T-cell (primary cell): ENCODE measurements at regions of chrX and their contacts with region 1.

Region 1: DNA sequence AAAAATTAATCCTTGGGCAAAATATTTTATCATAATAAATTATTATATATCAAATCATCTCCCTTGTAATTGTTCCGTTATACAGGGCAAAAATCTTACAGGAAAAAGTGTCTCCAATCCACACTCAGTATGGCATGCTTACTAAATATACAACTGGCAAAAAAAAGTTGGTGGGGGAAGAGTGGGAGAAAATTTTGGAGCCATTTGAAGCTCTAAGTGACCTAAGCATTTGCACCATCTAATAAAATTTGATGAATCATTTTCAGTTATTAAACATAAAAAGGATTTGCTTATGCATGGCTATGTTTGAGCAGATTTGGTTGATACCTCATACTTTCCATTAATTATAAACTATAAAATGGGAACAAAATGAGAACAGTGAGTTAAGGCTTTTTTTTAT is 68.1 kb upstream of the FAM9C start:
- DNase-seq: no peak
- ATAC-seq: no peak
- H3K4me3 ChIP-seq: no peak overlapping the region
- H3K4me3 Mint-ChIP-seq: no peak overlapping the region
- H3K27ac ChIP-seq: no peak overlapping the region
- H3K27ac Mint-ChIP-seq: no peak overlapping the region
- H3K4me1 ChIP-seq: no peaks in the 10 kb centered on the region
- H3K4me1 Mint-ChIP-seq: peaks cover 0 to 7% (median 4%) of the 10 kb centered on the region in 3 donors
- H3K27me3 ChIP-seq: no peaks in the 10 kb centered on the region
- H3K27me3 Mint-ChIP-seq: peaks cover 0 to 28% of the 10 kb centered on the region in 2 donors

Region 2: DNA sequence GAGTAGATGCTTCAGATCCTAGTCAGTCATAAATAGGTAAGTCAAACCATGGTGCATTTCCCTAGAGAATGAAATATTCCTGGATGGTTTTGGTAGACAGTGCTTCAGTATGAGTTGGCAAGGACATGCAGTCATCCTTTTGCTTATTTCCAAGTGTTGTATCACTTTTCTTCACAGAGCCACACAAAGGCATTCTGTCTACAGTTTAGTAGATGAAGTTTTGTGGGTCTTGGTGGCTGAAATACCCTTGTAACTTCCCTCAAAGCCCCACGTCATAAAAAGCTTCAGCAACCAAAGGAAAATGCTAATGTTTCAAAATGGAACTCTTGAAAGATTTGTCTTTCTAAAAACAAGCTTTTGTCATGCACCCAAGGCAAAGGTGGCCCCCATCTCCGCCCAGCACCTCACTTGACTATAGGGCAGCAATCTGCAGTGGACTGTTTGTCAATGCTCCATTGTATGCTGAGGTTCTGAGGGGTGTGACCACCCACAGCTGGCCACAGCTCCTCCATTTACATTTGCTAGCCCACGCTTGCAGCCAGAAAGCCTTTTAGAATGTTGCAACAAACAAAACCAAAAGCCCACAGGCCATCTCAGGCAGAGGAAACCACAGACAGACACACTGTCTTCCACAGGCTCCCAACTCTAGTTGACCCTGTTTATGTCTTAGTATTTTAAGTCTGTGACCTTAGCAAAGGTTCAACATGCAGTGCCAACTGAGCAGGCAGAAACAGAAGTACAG is 19.1 kb after region 1 on chrX:
- CTCF ChIA-PET with region 1: no interaction called
- POLR2A ChIA-PET with region 1: no interaction called
- DNase-seq: peak in 9 of 35 experiments; percentile 0 to 37 (median 17)
- ATAC-seq: peak; percentile 54 to 89 (median 69)
- H3K4me3 ChIP-seq: no peak overlapping the region
- H3K4me3 Mint-ChIP-seq: no peak overlapping the region
- H3K27ac ChIP-seq: no peak overlapping the region
- H3K27ac Mint-ChIP-seq: peak overlapping the region; percentile 74 to 82
- H3K4me1 ChIP-seq: peaks cover 6 to 13% of the 10 kb centered on the region in 2 experiments
- H3K4me1 Mint-ChIP-seq: peaks cover 24 to 42% (median 34%) of the 10 kb centered on the region in 3 donors
- H3K27me3 ChIP-seq: no peaks in the 10 kb centered on the region
- H3K27me3 Mint-ChIP-seq: peaks cover 0 to 14% of the 10 kb centered on the region in 2 donors

Region 3: DNA sequence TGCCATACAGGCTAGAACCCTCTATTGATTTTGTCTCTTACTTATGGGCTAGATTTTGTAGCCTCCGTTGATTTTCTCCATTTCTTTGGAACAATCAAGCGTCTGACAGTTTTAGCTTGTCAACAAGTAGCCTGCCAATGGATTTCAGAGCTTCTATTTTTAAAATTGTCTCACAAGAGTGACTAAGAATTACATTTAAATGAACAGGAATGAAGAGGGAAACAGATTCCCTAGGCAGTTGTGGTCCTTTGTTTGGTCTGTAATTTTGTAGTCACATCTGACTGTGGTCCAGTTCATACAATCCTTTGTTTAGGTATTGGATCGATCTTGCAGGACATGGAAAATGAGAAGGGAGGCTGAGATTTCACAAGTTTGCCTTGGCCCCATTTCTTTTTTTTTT is 370.2 kb after region 1 on chrX:
- CTCF ChIA-PET with region 1: no interaction called
- POLR2A ChIA-PET with region 1: interaction called in 1 of 2 experiments, 10 read pairs
- DNase-seq: no peak
- ATAC-seq: no peak
- H3K4me3 ChIP-seq: no peak overlapping the region
- H3K4me3 Mint-ChIP-seq: no peak overlapping the region
- H3K27ac ChIP-seq: no peak overlapping the region
- H3K27ac Mint-ChIP-seq: no peak overlapping the region
- H3K4me1 ChIP-seq: peaks cover 3 to 20% of the 10 kb centered on the region in 2 experiments
- H3K4me1 Mint-ChIP-seq: peaks cover 13 to 40% (median 24%) of the 10 kb centered on the region in 3 donors
- H3K27me3 ChIP-seq: no peaks in the 10 kb centered on the region
- H3K27me3 Mint-ChIP-seq: peaks cover 0 to 54% of the 10 kb centered on the region in 2 donors